ENCODE measurements at regions of chr18 and their contacts with region 1.

Region 1: GRCh38 chr18:74951165-74951760 is 257.7 kb downstream of the PTGR3 start:
- DNase-seq: peak; percentile 99
- ATAC-seq: peak; percentile 92
- H3K4me3 ChIP-seq: no peak overlapping the region
- H3K27ac ChIP-seq: peak overlapping the region; percentile 4; the same call in 1 of the 2 replicates
- H3K4me1 ChIP-seq: peaks cover 4% of the 10 kb centered on the region
- H3K27me3 ChIP-seq: no peaks in the 10 kb centered on the region
- CTCF ChIP-seq: no peak
- POLR2A ChIP-seq: no peak
- RAD21 ChIP-seq: peak; percentile 24; the same call in 1 of the 2 replicates

Region 2: GRCh38 chr18:74773171-74773624 is 178.1 kb before region 1 on chr18:
- CTCF ChIA-PET with region 1: no interaction called
- POLR2A ChIA-PET with region 1: no interaction called
- dilution Hi-C with region 1: no loop called
- in situ Hi-C with region 1: no loop called
- intact Hi-C with region 1: no loop called
- DNase-seq: no peak
- ATAC-seq: no peak
- H3K4me3 ChIP-seq: no peak overlapping the region
- H3K27ac ChIP-seq: no peak overlapping the region
- H3K4me1 ChIP-seq: peaks cover 9% of the 10 kb centered on the region
- H3K27me3 ChIP-seq: no peaks in the 10 kb centered on the region
- CTCF ChIP-seq: no peak
- POLR2A ChIP-seq: no peak
- RAD21 ChIP-seq: no peak

Region 3: DNA sequence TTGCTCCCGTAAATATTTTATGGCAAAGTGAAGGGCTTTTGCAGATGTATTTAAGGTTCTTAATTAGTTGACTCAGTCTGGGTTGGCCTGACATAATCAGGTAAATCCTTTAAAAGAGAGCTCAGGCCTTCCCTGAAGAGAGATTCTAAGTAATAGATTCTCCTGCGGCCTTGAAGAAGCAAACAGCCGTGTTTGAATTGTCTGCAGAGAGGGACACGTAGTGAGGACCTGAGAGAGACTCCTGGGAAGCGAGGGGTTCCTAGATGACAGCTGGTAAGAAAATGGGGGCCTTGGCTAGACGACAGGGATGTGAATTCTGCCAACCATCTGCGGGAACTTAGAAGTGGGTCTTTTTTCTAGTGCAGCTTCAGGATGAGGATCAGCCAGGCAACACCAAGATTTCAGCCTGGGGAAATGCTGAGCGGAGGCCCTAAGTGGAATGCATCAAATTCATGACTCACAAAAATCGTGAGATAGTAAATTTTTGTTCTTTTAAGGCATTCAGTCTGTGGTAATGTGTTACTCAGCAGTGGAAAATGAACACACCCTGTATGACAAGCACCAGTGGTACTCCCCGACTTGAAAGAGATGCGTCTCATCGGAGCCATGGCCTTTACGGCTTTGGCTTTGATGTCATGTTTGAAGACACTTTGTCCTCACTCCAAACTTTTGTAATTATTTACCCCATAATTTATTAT is 538.4 kb after region 1 on chr18:
- CTCF ChIA-PET with region 1: no interaction called
- POLR2A ChIA-PET with region 1: no interaction called
- dilution Hi-C with region 1: no loop called
- in situ Hi-C with region 1: loop called (anchors 10 kb)
- intact Hi-C with region 1: no loop called
- DNase-seq: peak; percentile 98
- ATAC-seq: peak; percentile 99
- H3K4me3 ChIP-seq: no peak overlapping the region
- H3K27ac ChIP-seq: peak overlapping the region; percentile 99
- H3K4me1 ChIP-seq: peaks cover 9% of the 10 kb centered on the region
- H3K27me3 ChIP-seq: no peaks in the 10 kb centered on the region
- CTCF ChIP-seq: no peak
- POLR2A ChIP-seq: no peak
- RAD21 ChIP-seq: 0 out of 2 replicates have a peak, but pooled peaks have one; percentile 17

Region 4: DNA sequence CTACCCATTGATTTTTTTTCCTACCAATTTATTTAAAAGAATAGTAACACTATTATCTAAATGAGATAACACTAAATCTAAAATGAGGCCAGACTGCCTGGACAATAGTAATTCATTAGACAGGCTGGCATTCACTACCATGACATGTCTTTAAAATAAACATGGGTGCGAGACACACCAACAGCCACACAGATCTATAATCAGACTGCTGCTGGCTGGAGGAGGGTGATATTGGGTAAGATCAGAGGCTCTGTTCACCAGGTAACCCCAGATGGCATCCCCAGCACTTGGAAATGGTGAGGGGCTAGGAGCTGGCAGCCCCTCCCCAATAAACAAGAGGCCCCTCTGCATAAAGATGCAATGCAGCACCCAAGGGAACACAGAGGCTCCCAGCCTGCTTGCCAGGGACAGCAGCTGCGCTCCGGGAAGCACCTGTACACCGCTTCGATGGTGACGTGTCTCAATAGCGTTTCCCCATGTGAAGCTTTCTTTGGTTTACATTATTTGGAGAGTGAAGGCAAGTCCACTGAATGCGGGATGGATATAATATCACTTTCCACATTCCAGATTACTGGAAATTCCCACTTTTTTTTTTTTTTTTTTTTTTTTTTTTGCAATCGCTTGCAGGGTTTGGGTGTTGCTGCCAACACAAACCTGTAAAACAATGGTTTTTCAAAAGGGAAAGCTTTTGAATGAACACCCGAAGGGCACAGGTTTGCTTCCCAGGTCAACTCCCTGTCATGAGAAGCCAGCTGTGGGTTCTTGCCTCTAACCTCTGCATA is 1384.8 kb after region 1 on chr18:
- CTCF ChIA-PET with region 1: interaction called, 5 read pairs
- POLR2A ChIA-PET with region 1: interaction called, 15 read pairs
- dilution Hi-C with region 1: no loop called
- in situ Hi-C with region 1: no loop called
- intact Hi-C with region 1: no loop called
- DNase-seq: no peak
- ATAC-seq: no peak
- H3K4me3 ChIP-seq: no peak overlapping the region
- H3K27ac ChIP-seq: no peak overlapping the region
- H3K4me1 ChIP-seq: no peaks in the 10 kb centered on the region
- H3K27me3 ChIP-seq: no peaks in the 10 kb centered on the region; the same call in 1 of the 2 replicates
- CTCF ChIP-seq: no peak
- POLR2A ChIP-seq: no peak
- RAD21 ChIP-seq: no peak